Adrenal gland (tissue), 19 donors: ENCODE measurements at regions of chr12 and their contacts with region 1.

Region 1: DNA sequence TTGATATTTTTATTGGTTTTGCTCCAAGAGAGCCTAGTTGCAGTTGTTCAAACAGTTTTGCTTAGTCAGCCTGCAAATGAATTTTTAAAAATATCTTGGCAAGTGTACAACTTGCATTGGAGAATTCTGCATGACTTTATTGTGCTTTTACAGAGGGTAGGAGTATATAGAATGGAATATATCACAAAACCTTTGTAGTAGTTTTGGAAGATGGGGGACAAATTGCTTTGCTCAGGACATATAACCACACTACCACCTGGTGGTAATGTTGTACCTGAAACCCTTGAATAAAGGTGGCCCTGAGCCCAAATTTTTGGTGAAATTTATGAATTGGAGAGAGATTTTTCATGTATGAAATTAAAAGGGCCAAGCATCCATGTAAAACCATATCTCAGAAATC is 645.2 kb downstream of the MED13L start:
- DNase-seq: no peak
- H3K4me3 ChIP-seq: no peak overlapping the region
- H3K27ac ChIP-seq: no peak overlapping the region
- H3K4me1 ChIP-seq: peaks cover 0 to 9% of the 10 kb centered on the region in 2 donors
- H3K27me3 ChIP-seq: no peaks in the 10 kb centered on the region
- CTCF ChIP-seq: peak in 3 of 6 experiments; percentile 20 to 27 (median 25)
- POLR2A ChIP-seq: no peak

Region 2: DNA sequence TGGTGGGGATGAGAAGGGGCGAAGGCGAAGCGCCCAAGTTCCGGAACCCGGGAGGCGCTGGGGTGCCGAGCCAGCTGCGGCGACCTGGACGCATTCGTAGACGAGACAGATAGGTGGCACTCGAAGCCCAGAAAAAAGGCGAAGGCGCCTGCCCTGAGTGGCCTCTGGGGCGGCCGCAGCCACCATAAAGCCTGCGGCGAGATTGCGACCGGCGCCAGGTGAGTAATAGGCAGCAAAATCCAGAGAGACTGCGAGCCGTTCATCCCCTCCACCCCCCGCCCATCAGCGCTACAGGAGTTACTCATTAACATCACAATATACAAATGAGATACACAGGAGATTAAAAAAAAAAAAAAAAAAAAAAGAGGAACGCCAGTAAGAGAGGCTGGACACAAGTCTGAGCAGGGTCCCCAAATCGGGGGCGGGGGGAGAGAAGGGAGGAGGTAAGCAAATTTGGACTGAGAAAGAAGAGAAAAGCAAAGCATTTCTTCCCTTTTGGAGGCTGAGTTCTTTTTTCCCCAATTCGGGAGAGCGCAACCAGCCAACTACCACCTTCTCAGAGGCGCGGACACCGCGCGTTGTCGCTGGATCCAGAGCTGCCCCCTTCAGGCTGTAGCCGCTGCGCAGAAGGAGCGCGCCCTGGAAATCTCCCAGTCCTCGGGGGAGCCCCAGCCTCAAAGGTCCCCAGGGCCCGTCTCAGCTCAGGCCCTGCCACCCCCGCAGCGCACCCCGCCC is 964.0 kb before region 1 on chr12:
- intact Hi-C with region 1: loop called in 1 of 2 experiments (anchors 5 kb)
- DNase-seq: peak; percentile 89 to 95 (median 93)
- H3K4me3 ChIP-seq: peak overlapping the region in 2 of 4 donors; percentile 39 to 74
- H3K27ac ChIP-seq: peak overlapping the region; percentile 48 to 99 (median 93)
- H3K4me1 ChIP-seq: peaks cover 27 to 36% of the 10 kb centered on the region in 2 donors
- H3K27me3 ChIP-seq: no peaks in the 10 kb centered on the region
- CTCF ChIP-seq: peak; percentile 25 to 86 (median 68)
- POLR2A ChIP-seq: peak; percentile 37 to 74